ENCODE measurements at regions of chr20 and their contacts with region 1.

Region 1: GRCh38 chr20:35443003-35443402 is 5.0 kb upstream of the GDF5 start:
- DNase-seq: no peak
- H3K4me3 ChIP-seq: no peak overlapping the region
- H3K27ac ChIP-seq: no peak overlapping the region
- H3K4me1 ChIP-seq: peaks cover 2% of the 10 kb centered on the region
- H3K27me3 ChIP-seq: no peaks in the 10 kb centered on the region
- CTCF ChIP-seq: no peak
- POLR2A ChIP-seq: no peak

Region 2: DNA sequence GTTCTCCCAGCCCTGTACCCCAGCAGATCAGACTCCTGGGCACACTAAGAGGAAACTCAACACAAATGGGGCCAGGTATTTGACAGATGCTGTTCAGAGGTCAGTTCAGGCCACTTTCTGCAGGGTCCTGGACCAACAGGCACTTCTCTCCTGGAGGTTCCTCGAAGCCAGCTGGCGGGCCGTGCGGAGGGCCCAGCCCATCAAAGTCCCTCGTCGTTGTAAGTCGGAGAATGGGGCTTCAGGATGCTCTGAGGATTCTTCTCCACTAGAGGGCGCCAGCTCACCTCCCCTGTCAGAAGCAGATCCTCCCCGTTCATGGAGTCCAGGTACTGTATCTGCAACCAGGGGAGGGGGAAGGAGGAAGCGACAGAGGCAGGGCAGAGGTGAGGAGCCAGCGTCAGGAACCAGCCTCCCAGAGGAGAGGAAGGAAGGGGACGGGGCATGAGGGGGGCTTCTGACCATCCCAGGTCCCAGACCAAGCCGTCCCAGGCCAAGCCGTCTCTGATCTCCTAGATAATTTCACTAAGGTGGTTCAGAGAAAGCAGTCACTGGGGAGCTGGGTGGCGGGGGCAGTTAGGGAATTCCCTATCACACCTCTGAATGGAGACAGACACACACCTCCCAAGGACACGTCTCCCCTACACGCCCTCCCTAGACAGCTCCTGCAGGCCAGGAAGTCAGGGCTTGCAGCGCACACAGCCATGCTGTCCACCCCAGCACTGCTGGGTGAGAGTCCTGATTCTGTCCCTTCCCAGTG is 139.1 kb before region 1 on chr20:
- intact Hi-C with region 1: loop called (anchors 2 kb)
- DNase-seq: peak; percentile 86
- H3K4me3 ChIP-seq: no peak overlapping the region
- H3K27ac ChIP-seq: peak overlapping the region in 1 of 2 donors; percentile 5
- H3K4me1 ChIP-seq: peaks cover 13% of the 10 kb centered on the region
- H3K27me3 ChIP-seq: no peaks in the 10 kb centered on the region
- CTCF ChIP-seq: peak; percentile 86 to 93 (median 88)
- POLR2A ChIP-seq: no peak

Region 3: DNA sequence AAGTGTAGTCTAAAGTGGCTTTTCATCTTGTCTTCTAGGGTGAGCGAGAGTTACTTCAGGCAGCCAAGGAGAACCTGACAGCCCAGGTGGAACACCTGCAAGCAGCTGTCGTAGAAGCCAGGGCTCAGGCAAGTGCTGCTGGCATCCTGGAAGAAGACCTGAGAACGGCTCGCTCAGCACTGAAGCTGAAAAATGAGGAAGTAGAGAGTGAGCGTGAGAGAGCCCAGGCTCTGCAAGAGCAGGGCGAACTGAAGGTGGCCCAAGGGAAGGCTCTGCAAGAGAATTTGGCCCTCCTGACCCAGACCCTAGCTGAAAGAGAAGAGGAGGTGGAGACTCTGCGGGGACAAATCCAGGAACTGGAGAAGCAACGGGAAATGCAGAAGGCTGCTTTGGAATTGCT is 59.3 kb after region 1 on chr20:
- intact Hi-C with region 1: no loop called
- DNase-seq: no peak
- H3K4me3 ChIP-seq: no peak overlapping the region
- H3K27ac ChIP-seq: no peak overlapping the region
- H3K4me1 ChIP-seq: no peaks in the 10 kb centered on the region
- H3K27me3 ChIP-seq: no peaks in the 10 kb centered on the region
- CTCF ChIP-seq: no peak
- POLR2A ChIP-seq: no peak

Region 4: GRCh38 chr20:35871311-35871771 is 428.3 kb after region 1 on chr20:
- intact Hi-C with region 1: no loop called
- DNase-seq: peak; percentile 44
- H3K4me3 ChIP-seq: no peak overlapping the region
- H3K27ac ChIP-seq: peak overlapping the region; percentile 57 to 59
- H3K4me1 ChIP-seq: peaks cover 2% of the 10 kb centered on the region
- H3K27me3 ChIP-seq: no peaks in the 10 kb centered on the region
- CTCF ChIP-seq: no peak
- POLR2A ChIP-seq: no peak

Measured in prostate gland (tissue), 2 donors.